ENCODE measurements at regions of chr5 and their contacts with region 1.

Region 1: DNA sequence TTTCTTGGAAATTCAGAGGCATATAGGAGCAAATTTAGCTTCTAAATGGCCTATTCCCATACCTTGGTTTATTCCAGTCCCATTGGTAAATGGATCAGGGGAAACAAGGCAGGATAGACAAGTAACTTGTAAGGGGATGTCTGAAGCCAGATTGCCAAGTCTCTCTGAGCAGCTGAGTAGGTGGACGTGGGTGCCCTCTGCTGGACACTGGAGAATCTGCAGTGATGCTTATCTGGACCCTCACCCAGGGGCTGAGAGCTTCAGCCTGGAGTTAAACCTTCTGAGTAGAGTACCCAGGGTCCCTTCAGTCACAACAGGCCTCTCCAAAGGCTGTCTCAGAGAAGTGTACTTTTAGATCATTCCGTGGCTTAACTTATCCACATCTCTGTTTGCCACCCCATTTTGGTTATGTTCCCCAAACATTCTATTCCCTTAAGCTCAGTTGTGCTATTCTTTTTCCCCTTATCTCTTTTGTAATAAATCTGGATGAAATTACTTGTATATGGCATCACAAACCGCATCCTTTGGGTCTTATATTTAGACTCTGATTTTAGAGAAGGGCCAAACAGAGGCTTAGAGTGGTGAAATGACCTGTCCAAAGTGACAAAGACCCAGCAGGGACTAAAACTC is 218.3 kb upstream of the GLRA1 start:
- DNase-seq: peak; percentile 70
- ATAC-seq: peak; percentile 71
- H3K4me3 ChIP-seq: no peak overlapping the region
- H3K4me3 Mint-ChIP-seq: no peak overlapping the region
- H3K27ac ChIP-seq: no peak overlapping the region
- H3K27ac Mint-ChIP-seq: no peak overlapping the region
- H3K4me1 ChIP-seq: no peaks in the 10 kb centered on the region
- H3K4me1 Mint-ChIP-seq: no peaks in the 10 kb centered on the region
- H3K27me3 ChIP-seq: no peaks in the 10 kb centered on the region
- H3K27me3 Mint-ChIP-seq: peaks cover 14% of the 10 kb centered on the region
- CTCF ChIP-seq: peak; percentile 93

Region 2: GRCh38 chr5:151659001-151659754 is 483.8 kb before region 1 on chr5:
- CTCF ChIA-PET with region 1: interaction called, 32 read pairs
- POLR2A ChIA-PET with region 1: no interaction called
- intact Hi-C with region 1: no loop called
- DNase-seq: peak; percentile 86
- ATAC-seq: peak; percentile 90
- H3K4me3 ChIP-seq: no peak overlapping the region
- H3K4me3 Mint-ChIP-seq: no peak overlapping the region
- H3K27ac ChIP-seq: no peak overlapping the region
- H3K27ac Mint-ChIP-seq: no peak overlapping the region
- H3K4me1 ChIP-seq: peaks cover 15 to 22% of the 10 kb centered on the region in 2 donors
- H3K4me1 Mint-ChIP-seq: peaks cover 25% of the 10 kb centered on the region
- H3K27me3 ChIP-seq: peaks cover 0 to 4% (median 0%) of the 10 kb centered on the region in 4 experiments
- H3K27me3 Mint-ChIP-seq: peaks cover 4% of the 10 kb centered on the region
- CTCF ChIP-seq: peak; percentile 89

Region 3: DNA sequence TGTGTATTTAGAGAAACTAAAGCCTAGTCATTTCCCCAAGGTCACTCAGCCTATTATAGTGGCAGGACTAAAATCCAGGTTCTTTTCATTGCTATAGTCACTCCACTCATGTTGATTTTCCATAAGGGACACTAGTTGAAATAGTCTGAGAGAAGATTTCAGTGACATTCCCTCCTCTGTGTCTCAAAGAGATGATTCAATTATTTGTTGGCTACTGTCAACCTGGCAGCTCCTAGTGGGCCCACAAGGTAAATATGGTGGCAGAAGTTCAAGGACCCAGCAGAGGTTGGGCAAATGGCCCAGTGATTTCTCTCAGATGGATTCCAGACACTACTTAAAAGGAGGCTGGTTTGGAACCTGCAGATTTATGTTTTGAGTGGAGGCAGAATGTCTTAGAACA is 323.1 kb before region 1 on chr5:
- CTCF ChIA-PET with region 1: interaction called, 323 read pairs
- POLR2A ChIA-PET with region 1: no interaction called
- intact Hi-C with region 1: loop called (anchors 1 kb)
- DNase-seq: no peak
- ATAC-seq: no peak
- H3K4me3 ChIP-seq: no peak overlapping the region
- H3K4me3 Mint-ChIP-seq: no peak overlapping the region
- H3K27ac ChIP-seq: no peak overlapping the region
- H3K27ac Mint-ChIP-seq: no peak overlapping the region
- H3K4me1 ChIP-seq: no peaks in the 10 kb centered on the region
- H3K4me1 Mint-ChIP-seq: no peaks in the 10 kb centered on the region
- H3K27me3 ChIP-seq: no peaks in the 10 kb centered on the region
- H3K27me3 Mint-ChIP-seq: no peaks in the 10 kb centered on the region
- CTCF ChIP-seq: no peak

Region 4: GRCh38 chr5:151825445-151825844 is 317.5 kb before region 1 on chr5:
- CTCF ChIA-PET with region 1: interaction called, 323 read pairs
- POLR2A ChIA-PET with region 1: no interaction called
- intact Hi-C with region 1: loop called (anchors 1 kb)
- DNase-seq: peak; percentile 59
- ATAC-seq: no peak
- H3K4me3 ChIP-seq: no peak overlapping the region
- H3K4me3 Mint-ChIP-seq: no peak overlapping the region
- H3K27ac ChIP-seq: no peak overlapping the region
- H3K27ac Mint-ChIP-seq: no peak overlapping the region
- H3K4me1 ChIP-seq: no peaks in the 10 kb centered on the region
- H3K4me1 Mint-ChIP-seq: no peaks in the 10 kb centered on the region
- H3K27me3 ChIP-seq: no peaks in the 10 kb centered on the region
- H3K27me3 Mint-ChIP-seq: no peaks in the 10 kb centered on the region
- CTCF ChIP-seq: peak; percentile 83

Region 5: GRCh38 chr5:152124409-152125041 is 18.4 kb before region 1 on chr5:
- CTCF ChIA-PET with region 1: interaction called, 47 read pairs
- POLR2A ChIA-PET with region 1: no interaction called
- intact Hi-C with region 1: no loop called
- DNase-seq: no peak
- ATAC-seq: no peak
- H3K4me3 ChIP-seq: no peak overlapping the region
- H3K4me3 Mint-ChIP-seq: no peak overlapping the region
- H3K27ac ChIP-seq: no peak overlapping the region
- H3K27ac Mint-ChIP-seq: no peak overlapping the region
- H3K4me1 ChIP-seq: no peaks in the 10 kb centered on the region
- H3K4me1 Mint-ChIP-seq: no peaks in the 10 kb centered on the region
- H3K27me3 ChIP-seq: no peaks in the 10 kb centered on the region
- H3K27me3 Mint-ChIP-seq: peaks cover 8% of the 10 kb centered on the region
- CTCF ChIP-seq: no peak

Region 6: GRCh38 chr5:152164860-152165259 is 21.9 kb after region 1 on chr5:
- CTCF ChIA-PET with region 1: interaction called, 12 read pairs
- POLR2A ChIA-PET with region 1: no interaction called
- intact Hi-C with region 1: no loop called
- DNase-seq: no peak
- ATAC-seq: no peak
- H3K4me3 ChIP-seq: no peak overlapping the region
- H3K4me3 Mint-ChIP-seq: no peak overlapping the region
- H3K27ac ChIP-seq: no peak overlapping the region
- H3K27ac Mint-ChIP-seq: no peak overlapping the region
- H3K4me1 ChIP-seq: peaks cover 0 to 4% of the 10 kb centered on the region in 2 donors
- H3K4me1 Mint-ChIP-seq: no peaks in the 10 kb centered on the region
- H3K27me3 ChIP-seq: no peaks in the 10 kb centered on the region
- H3K27me3 Mint-ChIP-seq: peaks cover 13% of the 10 kb centered on the region
- CTCF ChIP-seq: no peak

Measured in B cell (primary cell).